ENCODE measurements at regions of chr16 and their contacts with region 1.

Region 1: DNA sequence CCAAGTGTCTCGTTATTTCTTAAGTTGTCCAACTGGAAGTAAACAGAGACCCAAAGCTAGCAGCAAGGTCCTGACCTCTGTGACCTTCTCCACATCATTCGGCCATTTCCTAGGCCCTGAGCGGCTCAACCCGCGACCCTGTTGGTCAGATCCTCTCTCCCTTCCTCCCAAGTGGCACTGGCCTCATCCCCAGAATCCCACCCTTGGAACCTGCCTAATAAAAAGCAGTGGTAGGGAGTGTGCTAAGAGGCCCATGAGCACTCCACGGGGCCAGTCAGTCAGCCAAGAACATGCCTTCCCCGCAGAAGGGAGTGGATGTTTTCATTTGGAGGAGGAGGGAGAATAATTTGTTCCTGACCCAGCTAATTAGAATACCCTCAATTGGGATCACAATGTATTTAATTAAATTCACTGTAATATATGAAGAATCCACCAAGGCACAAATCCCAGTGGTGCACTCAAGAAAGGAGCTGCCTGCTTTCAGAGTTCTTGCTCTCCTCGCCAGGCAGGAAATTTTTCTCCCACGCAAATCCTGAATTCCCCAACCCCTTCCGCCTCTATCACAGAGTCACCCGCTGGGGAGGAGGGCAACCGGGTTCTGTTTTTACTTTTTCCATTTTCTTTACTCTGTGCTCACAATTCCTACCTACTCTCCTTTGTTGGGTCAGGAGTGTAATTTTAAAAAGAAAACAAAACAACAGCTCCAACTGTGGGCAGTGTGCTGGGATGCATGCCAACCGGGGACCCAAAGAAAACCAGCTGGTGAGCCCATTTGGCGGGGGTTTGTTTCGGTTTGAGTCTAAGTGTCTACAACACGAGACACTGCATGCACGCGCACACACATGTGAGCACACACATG is 153.4 kb downstream of the ZFHX3 start:
- DNase-seq: no peak
- H3K4me3 ChIP-seq: no peak overlapping the region
- H3K27me3 ChIP-seq: no peaks in the 10 kb centered on the region
- CTCF ChIP-seq: no peak

Region 2: GRCh38 chr16:72664509-72665225 is 229.9 kb before region 1 on chr16:
- CTCF ChIA-PET with region 1: no interaction called
- POLR2A ChIA-PET with region 1: no interaction called
- DNase-seq: peak; percentile 96
- H3K4me3 ChIP-seq: peak overlapping the region; percentile 86
- H3K27me3 ChIP-seq: no peaks in the 10 kb centered on the region
- CTCF ChIP-seq: 0 out of 2 replicates have a peak, but pooled peaks have one; percentile 20

Region 3: GRCh38 chr16:72877374-72878028 is 17.0 kb before region 1 on chr16:
- CTCF ChIA-PET with region 1: interaction called, 3 read pairs
- POLR2A ChIA-PET with region 1: interaction called, 12 read pairs
- DNase-seq: peak; percentile 85
- H3K4me3 ChIP-seq: no peak overlapping the region
- H3K27me3 ChIP-seq: no peaks in the 10 kb centered on the region
- CTCF ChIP-seq: no peak